A549 (cell line): ENCODE measurements at regions of chr10 and their contacts with region 1.

Region 1: GRCh38 chr10:119139464-119140067 is 25.9 kb downstream of the SFXN4 start:
- DNase-seq: peak; percentile 51 to 59
- ATAC-seq: peak; percentile 90 to 92
- H3K4me3 ChIP-seq: no peak overlapping the region
- H3K27ac ChIP-seq: no peak overlapping the region
- H3K4me1 ChIP-seq: no peaks in the 10 kb centered on the region
- CTCF ChIP-seq: peak; percentile 47
- EP300 ChIP-seq: no peak
- POLR2A ChIP-seq: no peak
- RAD21 ChIP-seq: peak; percentile 60 to 79

Region 2: GRCh38 chr10:119028900-119029612 is 110.5 kb before region 1 on chr10:
- CTCF ChIA-PET with region 1: no interaction called
- POLR2A ChIA-PET with region 1: no interaction called
- DNase-seq: peak; percentile 88 to 91
- ATAC-seq: peak; percentile 61 to 84
- H3K4me3 ChIP-seq: peak overlapping the region; percentile 83
- H3K27ac ChIP-seq: peak overlapping the region; percentile 82 to 85
- H3K4me1 ChIP-seq: peaks cover 31% of the 10 kb centered on the region
- CTCF ChIP-seq: no peak
- EP300 ChIP-seq: no peak
- POLR2A ChIP-seq: no peak
- RAD21 ChIP-seq: peak in 1 of 2 experiments; percentile 12; a peak in 1 of 5 replicates

Region 3: DNA sequence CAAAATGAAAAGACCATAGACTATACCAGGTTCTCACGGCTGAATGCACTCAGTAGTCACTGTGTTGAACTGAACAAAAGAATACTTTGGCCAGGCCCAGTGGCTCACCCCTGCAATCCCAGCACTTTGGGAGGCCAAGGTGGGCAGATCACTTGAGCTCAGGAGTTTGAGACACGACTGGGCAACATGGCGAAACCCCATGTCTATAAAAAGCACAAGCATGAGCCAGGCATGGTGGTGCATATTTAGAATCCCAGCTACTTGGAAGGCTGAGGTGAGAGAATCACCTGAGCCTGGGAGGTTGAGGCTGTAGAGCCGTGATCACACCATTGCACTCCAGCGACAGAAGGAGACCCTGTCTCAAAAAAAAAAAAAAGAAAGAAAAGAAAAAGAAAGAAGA is 13.5 kb after region 1 on chr10:
- CTCF ChIA-PET with region 1: interaction called, 10 read pairs
- POLR2A ChIA-PET with region 1: no interaction called
- DNase-seq: no peak
- ATAC-seq: no peak
- H3K4me3 ChIP-seq: no peak overlapping the region
- H3K27ac ChIP-seq: no peak overlapping the region
- H3K4me1 ChIP-seq: no peaks in the 10 kb centered on the region
- CTCF ChIP-seq: no peak
- EP300 ChIP-seq: no peak
- POLR2A ChIP-seq: no peak
- RAD21 ChIP-seq: no peak